Activated T-helper 1 cell treated with anti-CD3 and anti-CD28 coated beads, Interleukin-12 subunit alpha, Interleukin-12 subunit beta, Interleukin-2, Interleukin-4 antibody, amounts not matched to agents 30 ng/mL and 10 ng/mL and 1 ng/mL, durations not matched to agents 14 hours and 24 hours and 36 hours (primary cell): ENCODE measurements at regions of chr7 and their contacts with region 1.

Region 1: DNA sequence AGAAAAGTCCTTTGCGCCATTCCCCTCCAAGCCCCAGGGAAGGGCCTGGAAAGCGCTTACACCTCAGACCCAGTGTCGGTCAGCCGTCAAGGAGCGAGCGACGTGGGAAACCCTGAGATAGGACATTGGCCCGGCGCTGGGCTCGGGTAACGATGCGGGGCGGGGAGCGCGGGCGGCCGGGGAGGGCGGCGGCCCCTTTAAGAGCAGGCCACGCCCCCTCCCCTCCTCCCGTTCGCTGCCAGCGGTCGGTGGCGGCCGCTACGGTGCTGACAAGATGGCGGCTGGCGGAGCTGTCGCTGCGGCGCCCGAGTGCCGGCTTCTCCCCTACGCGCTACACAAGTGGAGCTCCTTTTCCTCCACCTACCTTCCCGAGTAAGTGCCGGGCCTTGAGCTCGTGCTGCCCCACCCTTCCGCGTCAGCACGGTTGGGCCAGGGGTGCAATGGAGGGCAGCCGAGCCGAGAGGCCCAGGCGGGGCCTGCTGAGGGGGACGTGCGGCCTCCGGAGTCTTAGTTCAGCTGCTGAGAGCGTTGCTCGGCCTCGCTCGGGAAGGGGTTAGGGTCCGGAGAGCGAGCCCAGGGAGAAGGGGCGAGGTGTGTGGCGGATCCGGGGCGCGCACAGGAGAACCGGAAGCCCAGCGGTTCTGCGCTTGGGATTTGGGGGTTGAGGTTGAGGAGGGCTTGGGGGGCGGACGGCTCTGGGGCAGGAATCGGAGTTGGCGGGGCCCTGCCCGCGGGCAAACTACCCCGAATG is at the start of gene MKLN1:
- DNase-seq: peak; percentile 87
- H3K4me3 Mint-ChIP-seq: peak within 1 kb of the TSS; percentile 96
- H3K27ac Mint-ChIP-seq: peak within 1 kb of the TSS; percentile 97
- H3K4me1 Mint-ChIP-seq: peaks cover 66% of the 10 kb centered on the region
- H3K27me3 Mint-ChIP-seq: no peaks in the 10 kb centered on the region
- total RNA-seq, gene MKLN1: 31.1 and 34.0 TPM in 2 replicates

Region 2: GRCh38 chr7:129611246-129612111 is 1716.3 kb before region 1 on chr7 and contains the start of gene NRF1:
- intact Hi-C with region 1: loop called (anchors 5 kb)
- DNase-seq: peak; percentile 89
- H3K4me3 Mint-ChIP-seq: peak within 1 kb of the TSS; percentile 98
- H3K27ac Mint-ChIP-seq: peak within 1 kb of the TSS; percentile 99
- H3K4me1 Mint-ChIP-seq: peaks cover 48% of the 10 kb centered on the region
- H3K27me3 Mint-ChIP-seq: no peaks in the 10 kb centered on the region
- total RNA-seq, gene NRF1: 22.8 and 25.9 TPM in 2 replicates

Region 3: GRCh38 chr7:131057015-131057793 is 270.6 kb before region 1 on chr7:
- intact Hi-C with region 1: loop called (anchors 1 kb)
- DNase-seq: peak; percentile 47
- H3K4me3 Mint-ChIP-seq: peak overlapping the region; percentile 78
- H3K27ac Mint-ChIP-seq: peak overlapping the region; percentile 80
- H3K4me1 Mint-ChIP-seq: peaks cover 52% of the 10 kb centered on the region
- H3K27me3 Mint-ChIP-seq: no peaks in the 10 kb centered on the region

Region 4: GRCh38 chr7:131188367-131189339 is 139.1 kb before region 1 on chr7:
- intact Hi-C with region 1: loop called (anchors 1 kb)
- DNase-seq: peak; percentile 59
- H3K4me3 Mint-ChIP-seq: peak overlapping the region; percentile 52
- H3K27ac Mint-ChIP-seq: peak overlapping the region; percentile 91
- H3K4me1 Mint-ChIP-seq: peaks cover 59% of the 10 kb centered on the region
- H3K27me3 Mint-ChIP-seq: no peaks in the 10 kb centered on the region

Region 5: GRCh38 chr7:131370523-131370968 is 42.7 kb after region 1 on chr7:
- intact Hi-C with region 1: loop called (anchors 5 kb)
- DNase-seq: peak; percentile 45
- H3K4me3 Mint-ChIP-seq: no peak overlapping the region
- H3K27ac Mint-ChIP-seq: no peak overlapping the region
- H3K4me1 Mint-ChIP-seq: peaks cover 62% of the 10 kb centered on the region
- H3K27me3 Mint-ChIP-seq: peaks cover 5% of the 10 kb centered on the region

Region 6: DNA sequence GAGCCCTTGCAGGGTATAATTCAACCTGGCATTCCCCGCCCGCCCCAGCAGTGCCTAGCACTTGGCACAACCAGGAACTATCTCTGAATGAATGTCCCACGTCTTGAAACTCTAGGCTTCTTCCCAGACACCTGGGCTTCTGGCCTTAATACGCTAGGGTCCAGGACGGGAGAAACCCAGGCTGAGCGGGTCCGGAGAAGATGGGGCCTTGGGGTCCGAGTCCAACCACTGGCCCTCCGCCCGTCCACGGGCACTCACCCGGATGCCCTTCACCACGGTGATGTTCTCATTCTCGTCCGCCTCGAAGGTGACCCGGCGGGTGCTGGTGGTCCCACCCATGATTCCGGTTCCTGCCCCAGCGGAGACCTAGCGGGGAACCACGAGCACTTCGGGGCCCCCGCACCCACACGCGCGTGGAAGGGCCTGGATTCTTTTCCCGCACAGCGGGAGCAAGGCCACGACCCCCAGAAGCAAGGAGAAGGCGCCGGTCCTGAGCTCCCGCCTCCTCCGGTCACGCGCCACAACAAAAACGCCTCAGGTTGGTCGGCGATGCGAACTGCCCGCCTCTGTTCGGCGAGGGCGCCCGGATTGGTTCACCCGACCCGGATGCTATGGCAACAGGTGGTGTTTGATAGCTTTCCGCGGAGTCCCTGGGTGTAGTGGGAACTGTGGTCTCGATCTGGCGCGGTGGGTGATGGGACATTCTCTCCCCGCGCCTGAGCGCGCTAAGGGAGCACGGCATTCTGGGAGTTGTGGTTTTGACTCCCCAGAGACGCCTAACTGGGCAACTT is 1754.0 kb after region 1 on chr7 and contains the start of gene CHCHD3:
- intact Hi-C with region 1: loop called (anchors 5 kb)
- DNase-seq: peak; percentile 95
- H3K4me3 Mint-ChIP-seq: peak within 1 kb of the TSS; percentile 93
- H3K27ac Mint-ChIP-seq: peak within 1 kb of the TSS; percentile 94
- H3K4me1 Mint-ChIP-seq: peaks cover 33% of the 10 kb centered on the region
- H3K27me3 Mint-ChIP-seq: no peaks in the 10 kb centered on the region
- total RNA-seq, gene CHCHD3: 69.9 and 76.8 TPM in 2 replicates